GM13976 (cell line): ENCODE measurements at regions of chr1 and their contacts with region 1.

Region 1: DNA sequence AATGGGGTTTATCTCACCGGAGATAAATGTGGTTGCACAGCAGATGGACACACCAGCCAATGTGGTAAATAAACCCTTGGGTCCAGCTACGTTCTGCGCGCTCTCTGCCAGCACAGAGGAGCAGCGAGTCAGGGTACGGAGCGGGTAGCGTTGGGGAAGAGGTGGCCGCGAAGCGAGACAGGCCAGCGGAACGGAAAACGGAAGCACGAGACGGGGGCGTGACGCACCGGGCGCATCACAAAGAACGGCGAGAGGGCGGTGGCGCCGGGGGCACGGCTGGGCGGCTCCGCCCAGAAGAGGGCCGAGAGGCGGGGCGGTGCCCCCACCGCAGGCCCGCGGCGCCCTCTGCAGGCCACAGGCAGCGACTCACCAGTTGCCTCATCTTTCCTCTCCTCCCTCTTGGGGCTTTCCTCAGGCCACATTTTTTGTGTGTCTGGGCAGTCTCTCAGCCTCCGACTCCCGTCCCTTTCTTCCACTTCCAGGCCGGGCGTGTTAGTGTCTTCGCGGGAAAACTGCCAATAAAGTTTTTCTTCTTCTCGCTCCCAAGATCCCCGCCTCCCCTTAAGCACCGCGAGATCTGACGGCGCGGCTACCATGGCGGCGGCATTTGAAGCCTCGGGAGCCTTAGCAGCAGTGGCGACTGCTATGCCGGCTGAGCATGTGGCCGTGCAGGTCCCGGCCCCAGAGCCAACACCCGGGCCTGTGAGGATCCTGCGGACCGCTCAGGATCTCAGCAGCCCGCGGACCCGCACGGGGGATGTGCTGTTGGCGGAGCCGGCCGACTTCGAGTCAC is at the start of gene DDX20:
- DNase-seq: peak; percentile 97
- CTCF ChIP-seq: peak; percentile 83

Region 2: GRCh38 chr1:111227851-111228747 is 527.4 kb before region 1 on chr1:
- in situ Hi-C with region 1: loop called (anchors 5 kb)
- DNase-seq: no peak
- CTCF ChIP-seq: no peak